ENCODE measurements at regions of chr4 and their contacts with region 1.

Region 1: DNA sequence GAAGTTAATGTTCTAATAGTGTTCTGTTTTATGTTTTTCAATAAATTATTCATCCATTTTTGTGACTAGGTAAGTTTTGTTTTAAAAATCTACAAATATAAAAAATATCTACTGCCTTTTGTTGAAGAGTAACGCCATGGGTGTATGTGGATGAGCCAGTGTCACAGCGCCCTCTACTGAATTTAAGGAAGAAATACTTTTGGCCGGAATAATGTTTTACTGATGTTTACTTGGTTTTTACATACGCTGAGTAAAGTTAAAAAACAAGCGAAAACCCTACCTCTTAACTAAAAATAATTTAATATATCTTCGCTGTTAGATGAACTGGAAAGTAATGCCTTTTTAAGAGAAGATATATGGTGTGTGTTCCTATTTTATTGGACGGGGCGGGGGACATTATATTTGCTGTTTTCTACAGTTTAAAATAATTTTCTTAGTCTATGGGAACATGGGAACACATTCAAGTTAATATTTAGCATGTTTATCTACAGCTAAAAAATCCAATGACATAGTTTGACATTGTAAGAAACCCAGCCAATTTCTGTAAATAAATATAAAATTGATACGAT is 86.1 kb downstream of the CPE start:
- DNase-seq: peak in 4 of 5 donors; percentile 37 to 43 (median 38)
- H3K4me3 ChIP-seq: no peak overlapping the region
- H3K4me3 Mint-ChIP-seq: no peak overlapping the region
- H3K27ac ChIP-seq: no peak overlapping the region
- H3K27ac Mint-ChIP-seq: no peak overlapping the region
- H3K4me1 ChIP-seq: no peaks in the 10 kb centered on the region
- H3K4me1 Mint-ChIP-seq: no peaks in the 10 kb centered on the region
- H3K27me3 ChIP-seq: no peaks in the 10 kb centered on the region
- H3K27me3 Mint-ChIP-seq: peaks cover 0 to 2% of the 10 kb centered on the region in 2 donors

Region 2: DNA sequence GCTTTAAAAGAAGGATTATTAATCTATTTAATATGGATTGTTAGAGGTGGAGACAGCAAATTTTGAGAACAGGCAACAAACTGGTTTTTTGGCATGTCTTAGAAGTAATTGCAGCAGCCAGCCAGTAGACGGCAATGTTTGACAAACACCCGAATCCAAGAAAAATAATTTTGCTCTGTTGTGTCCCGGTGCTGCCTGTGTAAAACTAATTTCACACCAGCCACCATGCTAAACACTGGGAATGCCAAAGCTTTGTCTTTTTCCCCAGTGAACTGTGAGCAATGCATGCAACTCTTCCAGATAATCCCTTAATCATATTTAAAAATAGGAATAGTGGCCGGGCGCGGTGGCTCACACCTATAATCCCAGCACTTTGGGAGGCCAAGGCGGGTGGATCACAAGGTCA is 685.1 kb before region 1 on chr4:
- CTCF ChIA-PET with region 1: interaction called, 3 read pairs
- POLR2A ChIA-PET with region 1: no interaction called
- intact Hi-C with region 1: loop called (anchors 5 kb)
- DNase-seq: peak in 2 of 5 donors; percentile 6 to 8
- H3K4me3 ChIP-seq: no peak overlapping the region
- H3K4me3 Mint-ChIP-seq: no peak overlapping the region
- H3K27ac ChIP-seq: no peak overlapping the region
- H3K27ac Mint-ChIP-seq: no peak overlapping the region
- H3K4me1 ChIP-seq: no peaks in the 10 kb centered on the region
- H3K4me1 Mint-ChIP-seq: no peaks in the 10 kb centered on the region
- H3K27me3 ChIP-seq: no peaks in the 10 kb centered on the region
- H3K27me3 Mint-ChIP-seq: no peaks in the 10 kb centered on the region

Region 3: GRCh38 chr4:165343353-165344191 is 121.3 kb before region 1 on chr4:
- CTCF ChIA-PET with region 1: interaction called, 4 read pairs
- POLR2A ChIA-PET with region 1: no interaction called
- intact Hi-C with region 1: loop called (anchors 10 kb)
- DNase-seq: peak in 1 of 5 donors; percentile 3
- H3K4me3 ChIP-seq: no peak overlapping the region
- H3K4me3 Mint-ChIP-seq: no peak overlapping the region
- H3K27ac ChIP-seq: no peak overlapping the region
- H3K27ac Mint-ChIP-seq: no peak overlapping the region
- H3K4me1 ChIP-seq: no peaks in the 10 kb centered on the region
- H3K4me1 Mint-ChIP-seq: no peaks in the 10 kb centered on the region
- H3K27me3 ChIP-seq: no peaks in the 10 kb centered on the region
- H3K27me3 Mint-ChIP-seq: no peaks in the 10 kb centered on the region

Region 4: GRCh38 chr4:165454417-165454816 is 10.5 kb before region 1 on chr4:
- CTCF ChIA-PET with region 1: interaction called, 10 read pairs
- POLR2A ChIA-PET with region 1: no interaction called
- intact Hi-C with region 1: no loop called
- DNase-seq: no peak
- H3K4me3 ChIP-seq: no peak overlapping the region
- H3K4me3 Mint-ChIP-seq: no peak overlapping the region
- H3K27ac ChIP-seq: no peak overlapping the region
- H3K27ac Mint-ChIP-seq: no peak overlapping the region
- H3K4me1 ChIP-seq: no peaks in the 10 kb centered on the region
- H3K4me1 Mint-ChIP-seq: no peaks in the 10 kb centered on the region
- H3K27me3 ChIP-seq: no peaks in the 10 kb centered on the region
- H3K27me3 Mint-ChIP-seq: peaks cover 2 to 3% of the 10 kb centered on the region in 2 donors

Region 5: GRCh38 chr4:166143227-166143626 is 678.3 kb after region 1 on chr4:
- CTCF ChIA-PET with region 1: no interaction called
- POLR2A ChIA-PET with region 1: no interaction called
- intact Hi-C with region 1: no loop called
- DNase-seq: peak in 2 of 5 donors; percentile 8 to 20
- H3K4me3 ChIP-seq: no peak overlapping the region
- H3K4me3 Mint-ChIP-seq: no peak overlapping the region
- H3K27ac ChIP-seq: no peak overlapping the region
- H3K27ac Mint-ChIP-seq: no peak overlapping the region
- H3K4me1 ChIP-seq: no peaks in the 10 kb centered on the region
- H3K4me1 Mint-ChIP-seq: no peaks in the 10 kb centered on the region
- H3K27me3 ChIP-seq: no peaks in the 10 kb centered on the region
- H3K27me3 Mint-ChIP-seq: peaks cover 0 to 1% of the 10 kb centered on the region in 2 donors

Region 6: GRCh38 chr4:166518776-166519175 is 1053.9 kb after region 1 on chr4:
- CTCF ChIA-PET with region 1: no interaction called
- POLR2A ChIA-PET with region 1: no interaction called
- intact Hi-C with region 1: no loop called
- DNase-seq: no peak
- H3K4me3 ChIP-seq: no peak overlapping the region
- H3K4me3 Mint-ChIP-seq: no peak overlapping the region
- H3K27ac ChIP-seq: no peak overlapping the region
- H3K27ac Mint-ChIP-seq: no peak overlapping the region
- H3K4me1 ChIP-seq: no peaks in the 10 kb centered on the region
- H3K4me1 Mint-ChIP-seq: no peaks in the 10 kb centered on the region
- H3K27me3 ChIP-seq: no peaks in the 10 kb centered on the region
- H3K27me3 Mint-ChIP-seq: no peaks in the 10 kb centered on the region

Measured in CD4-positive, alpha-beta memory T cell (primary cell).